Activated B cell treated with CpG ODN at 0.5 μM for 24 hours (primary cell): ENCODE measurements at regions of chr15 and their contacts with region 1.

Region 1: GRCh38 chr15:74873036-74873755 is at the start of gene SCAMP2:
- DNase-seq: peak; percentile 90
- ATAC-seq: peak; percentile 93
- H3K4me3 Mint-ChIP-seq: peak within 1 kb of the TSS; percentile 90
- H3K27ac Mint-ChIP-seq: peak within 1 kb of the TSS; percentile 94
- H3K4me1 Mint-ChIP-seq: peaks cover 50% of the 10 kb centered on the region
- H3K27me3 Mint-ChIP-seq: no peaks in the 10 kb centered on the region
- CTCF ChIP-seq: no peak
- total RNA-seq, gene SCAMP2: 112 and 129 TPM in 2 replicates

Region 2: DNA sequence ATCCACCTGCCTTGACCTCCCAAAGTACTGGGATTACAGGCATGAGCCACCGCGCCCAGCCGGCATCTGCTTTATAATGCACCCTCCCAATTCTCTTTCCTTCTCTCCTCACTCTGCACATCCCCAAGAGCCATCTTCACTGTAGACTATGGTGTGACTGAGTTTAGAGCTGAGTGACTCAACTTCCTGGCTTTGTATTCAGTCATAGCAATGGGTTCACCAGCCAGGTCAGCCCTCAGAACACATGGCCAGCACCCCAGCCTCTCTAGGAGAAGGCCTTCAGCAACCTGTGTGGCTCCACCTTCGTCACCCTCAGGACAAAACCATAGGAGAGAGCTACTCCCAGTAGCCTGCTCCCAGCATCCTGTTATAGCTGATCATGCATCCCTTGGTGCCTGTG is 299.2 kb before region 1 on chr15:
- CTCF ChIA-PET with region 1: no interaction called
- POLR2A ChIA-PET with region 1: interaction called, 11 read pairs
- intact Hi-C with region 1: no loop called
- DNase-seq: no peak
- ATAC-seq: no peak
- H3K4me3 Mint-ChIP-seq: no peak overlapping the region
- H3K27ac Mint-ChIP-seq: no peak overlapping the region
- H3K4me1 Mint-ChIP-seq: no peaks in the 10 kb centered on the region
- H3K27me3 Mint-ChIP-seq: no peaks in the 10 kb centered on the region
- CTCF ChIP-seq: no peak

Region 3: DNA sequence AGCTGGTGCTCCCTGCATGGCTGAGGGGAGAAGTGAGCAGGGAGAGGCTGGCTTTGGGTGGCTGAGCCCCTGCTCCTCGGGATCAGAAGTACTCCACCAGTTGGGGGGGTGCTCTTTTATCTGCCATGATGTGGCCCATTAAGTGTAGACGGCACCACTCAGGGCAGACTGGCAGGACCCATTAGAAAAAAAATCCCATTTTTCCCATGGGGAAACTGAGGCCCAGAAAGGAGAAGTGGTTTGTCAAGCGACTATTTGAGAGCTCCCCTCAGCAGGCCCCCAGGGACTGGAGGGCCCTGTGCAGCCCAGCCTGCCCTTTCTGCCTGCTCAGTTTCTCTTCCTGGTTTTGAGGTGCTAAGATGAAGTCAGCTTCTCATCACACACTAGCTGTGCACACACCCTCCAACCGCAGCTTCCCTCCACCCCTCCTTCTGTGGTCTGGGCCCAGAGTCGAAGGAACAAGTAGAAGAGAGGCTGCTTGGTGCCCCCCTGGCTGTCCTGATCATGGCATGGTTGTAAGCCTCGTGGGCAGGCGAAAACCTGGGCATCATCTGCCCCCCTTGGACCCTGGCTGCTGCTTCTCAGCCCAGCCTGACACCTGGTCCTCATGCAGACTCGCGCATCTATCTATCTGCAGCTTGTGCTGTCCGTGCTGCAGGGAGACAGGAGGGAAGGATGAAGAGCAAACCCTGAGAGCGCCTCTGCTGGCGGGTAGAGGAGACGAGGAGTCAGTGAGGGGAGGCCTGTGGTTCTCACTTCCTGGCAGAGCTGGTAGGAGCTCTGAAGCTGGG is 85.8 kb before region 1 on chr15:
- CTCF ChIA-PET with region 1: interaction called, 3 read pairs
- POLR2A ChIA-PET with region 1: interaction called, 13 read pairs
- intact Hi-C with region 1: no loop called
- DNase-seq: peak; percentile 82
- ATAC-seq: peak; percentile 60
- H3K4me3 Mint-ChIP-seq: peak overlapping the region; percentile 89
- H3K27ac Mint-ChIP-seq: peak overlapping the region; percentile 99
- H3K4me1 Mint-ChIP-seq: peaks cover 90% of the 10 kb centered on the region
- H3K27me3 Mint-ChIP-seq: no peaks in the 10 kb centered on the region
- CTCF ChIP-seq: no peak

Region 4: GRCh38 chr15:74884428-74885223 is 11.4 kb after region 1 on chr15:
- CTCF ChIA-PET with region 1: interaction called, 3 read pairs
- POLR2A ChIA-PET with region 1: interaction called, 17 read pairs
- intact Hi-C with region 1: no loop called
- DNase-seq: no peak
- ATAC-seq: no peak
- H3K4me3 Mint-ChIP-seq: no peak overlapping the region
- H3K27ac Mint-ChIP-seq: no peak overlapping the region
- H3K4me1 Mint-ChIP-seq: peaks cover 14% of the 10 kb centered on the region
- H3K27me3 Mint-ChIP-seq: no peaks in the 10 kb centered on the region
- CTCF ChIP-seq: no peak

Region 5: GRCh38 chr15:74937596-74938296 is 64.5 kb after region 1 on chr15 and contains the start of gene COX5A:
- CTCF ChIA-PET with region 1: interaction called, 3 read pairs
- POLR2A ChIA-PET with region 1: interaction called, 4 read pairs
- intact Hi-C with region 1: loop called (anchors 1 kb)
- DNase-seq: peak; percentile 86
- ATAC-seq: peak; percentile 97
- H3K4me3 Mint-ChIP-seq: peak within 1 kb of the TSS; percentile 86
- H3K27ac Mint-ChIP-seq: peak within 1 kb of the TSS; percentile 90
- H3K4me1 Mint-ChIP-seq: peaks cover 34% of the 10 kb centered on the region
- H3K27me3 Mint-ChIP-seq: no peaks in the 10 kb centered on the region
- CTCF ChIP-seq: no peak
- total RNA-seq, gene COX5A: 150 and 159 TPM in 2 replicates